ENCODE measurements at regions of chr14 and their contacts with region 1.

Region 1: GRCh38 chr14:95375539-95376109 is 55.9 kb upstream of the CLMN start:
- DNase-seq: no peak
- H3K4me3 ChIP-seq: no peak overlapping the region
- H3K27ac ChIP-seq: no peak overlapping the region
- H3K4me1 ChIP-seq: no peaks in the 10 kb centered on the region
- H3K27me3 ChIP-seq: no peaks in the 10 kb centered on the region
- CTCF ChIP-seq: no peak
- EP300 ChIP-seq: no peak
- POLR2A ChIP-seq: no peak

Region 2: GRCh38 chr14:96956464-96957239 is 1581.0 kb after region 1 on chr14:
- in situ Hi-C with region 1: no loop called
- intact Hi-C with region 1: loop called (anchors 5 kb)
- DNase-seq: no peak
- H3K4me3 ChIP-seq: no peak overlapping the region
- H3K27ac ChIP-seq: no peak overlapping the region
- H3K4me1 ChIP-seq: no peaks in the 10 kb centered on the region
- H3K27me3 ChIP-seq: no peaks in the 10 kb centered on the region
- CTCF ChIP-seq: no peak
- EP300 ChIP-seq: no peak
- POLR2A ChIP-seq: no peak

Measured in transverse colon (tissue), 4 donors.